Colonic mucosa (tissue), 4 donors: ENCODE measurements at regions of chr9 and their contacts with region 1.

Region 1: DNA sequence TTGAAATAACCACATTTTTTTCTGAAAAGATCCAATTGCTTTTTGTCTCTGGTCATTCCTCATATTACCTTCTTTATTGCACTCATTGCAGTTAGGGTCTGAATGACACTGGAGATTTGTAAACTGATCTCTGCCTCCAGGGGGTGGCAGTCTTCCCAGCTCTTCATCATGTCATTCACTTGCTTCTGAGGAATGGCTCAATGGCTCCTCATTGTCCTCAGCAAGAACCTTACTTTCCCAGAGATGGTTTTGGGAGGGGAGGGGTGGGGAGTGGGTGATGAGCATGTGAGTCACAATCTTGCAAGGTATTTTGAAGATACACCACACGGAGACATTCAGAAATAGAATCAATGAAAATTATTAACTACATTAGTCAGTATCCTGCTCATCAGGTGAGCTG is 159.8 kb upstream of the GAS1 start:
- DNase-seq: no peak
- H3K4me3 ChIP-seq: no peak overlapping the region
- H3K27ac ChIP-seq: no peak overlapping the region
- H3K4me1 ChIP-seq: no peaks in the 10 kb centered on the region
- H3K27me3 ChIP-seq: no peaks in the 10 kb centered on the region
- CTCF ChIP-seq: no peak

Region 2: GRCh38 chr9:87086221-87086818 is 20.8 kb before region 1 on chr9:
- intact Hi-C with region 1: loop called (anchors 2 kb)
- DNase-seq: no peak
- H3K4me3 ChIP-seq: no peak overlapping the region
- H3K27ac ChIP-seq: no peak overlapping the region
- H3K4me1 ChIP-seq: no peaks in the 10 kb centered on the region
- H3K27me3 ChIP-seq: no peaks in the 10 kb centered on the region
- CTCF ChIP-seq: no peak